Naive thymus-derived CD4-positive, alpha-beta T cell (primary cell): ENCODE measurements at regions of chr16 and their contacts with region 1.

Region 1: DNA sequence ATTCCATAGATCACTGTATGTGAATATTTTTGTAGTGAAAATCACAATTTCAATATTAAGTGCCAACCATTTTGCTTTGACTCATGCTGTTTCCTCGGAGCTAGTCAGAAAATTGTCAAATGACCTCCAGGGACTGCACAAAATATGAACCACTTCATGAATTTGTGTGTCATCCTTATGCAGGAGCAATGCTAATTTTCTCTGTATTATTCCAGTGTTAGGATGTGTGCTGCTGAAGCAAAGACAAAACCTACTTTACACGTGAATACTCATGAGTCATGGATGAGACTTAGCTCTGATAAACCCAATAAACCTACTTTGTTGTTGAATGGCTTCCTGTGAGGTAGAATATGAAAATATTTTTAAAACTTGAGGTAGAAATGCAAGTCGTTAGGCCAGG is 65.2 kb downstream of the SHCBP1 start:
- DNase-seq: no peak
- ATAC-seq: no peak
- H3K4me3 ChIP-seq: no peak overlapping the region
- H3K4me3 Mint-ChIP-seq: no peak overlapping the region
- H3K27ac ChIP-seq: no peak overlapping the region
- H3K27ac Mint-ChIP-seq: peak overlapping the region in 1 of 9 donors; percentile 36
- H3K4me1 ChIP-seq: no peaks in the 10 kb centered on the region
- H3K4me1 Mint-ChIP-seq: peaks cover 0 to 7% (median 0%) of the 10 kb centered on the region in 7 donors
- H3K27me3 ChIP-seq: no peaks in the 10 kb centered on the region
- H3K27me3 Mint-ChIP-seq: peaks cover 9 to 18% (median 13%) of the 10 kb centered on the region in 5 donors

Region 2: GRCh38 chr16:46607529-46607928 is 51.6 kb after region 1 on chr16:
- CTCF ChIA-PET with region 1: interaction called, 5 read pairs
- POLR2A ChIA-PET with region 1: no interaction called
- intact Hi-C with region 1: loop called (anchors 1 kb)
- DNase-seq: peak in 4 of 9 donors; percentile 22 to 33 (median 26)
- ATAC-seq: no peak
- H3K4me3 ChIP-seq: no peak overlapping the region
- H3K4me3 Mint-ChIP-seq: no peak overlapping the region
- H3K27ac ChIP-seq: no peak overlapping the region
- H3K27ac Mint-ChIP-seq: no peak overlapping the region
- H3K4me1 ChIP-seq: no peaks in the 10 kb centered on the region
- H3K4me1 Mint-ChIP-seq: peaks cover 0 to 3% (median 0%) of the 10 kb centered on the region in 7 donors
- H3K27me3 ChIP-seq: no peaks in the 10 kb centered on the region
- H3K27me3 Mint-ChIP-seq: no peaks in the 10 kb centered on the region

Region 3: DNA sequence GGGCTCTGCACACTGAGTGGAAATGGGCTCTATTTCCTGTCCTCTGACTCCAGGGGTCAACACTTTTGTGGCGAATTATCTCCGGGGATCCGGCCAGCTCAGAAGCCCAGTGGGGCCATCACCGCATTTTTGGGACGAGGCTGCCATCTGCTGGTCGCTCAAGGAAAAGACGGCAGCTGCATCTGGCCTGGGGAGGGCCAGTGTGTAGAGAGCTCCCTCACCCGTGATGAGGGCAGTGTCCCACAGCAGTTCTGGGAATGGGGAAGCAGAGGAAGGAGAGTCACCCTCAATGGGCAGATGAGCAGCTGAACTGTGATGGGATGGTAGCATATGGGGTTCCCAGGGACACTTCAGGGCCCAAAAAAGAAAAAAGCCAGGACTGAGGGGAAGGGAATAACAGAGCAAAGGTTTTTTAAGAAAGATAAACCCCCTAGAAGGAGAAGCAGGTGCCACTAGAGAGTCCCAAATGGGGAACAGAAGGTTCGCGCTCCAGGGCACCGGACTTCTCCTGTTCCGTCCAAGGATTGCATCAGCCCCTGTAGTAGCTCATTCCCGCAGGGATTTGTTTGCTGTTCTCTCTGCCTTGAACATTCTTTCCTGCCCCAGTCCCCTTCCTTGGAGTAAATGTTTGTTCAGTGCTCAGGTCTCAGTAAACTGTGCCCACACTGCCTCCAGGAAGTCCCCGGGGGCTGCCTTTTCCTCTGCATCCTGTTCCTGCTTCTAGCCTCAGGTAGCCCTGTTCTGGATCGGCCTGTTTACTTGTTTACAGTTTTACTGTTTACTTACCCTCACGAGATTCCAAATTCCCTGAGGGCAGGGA is 1609.2 kb after region 1 on chr16:
- CTCF ChIA-PET with region 1: no interaction called
- POLR2A ChIA-PET with region 1: no interaction called
- intact Hi-C with region 1: loop called in 1 of 2 experiments (anchors 10 kb)
- DNase-seq: peak; percentile 20 to 71 (median 45)
- ATAC-seq: peak; percentile 87
- H3K4me3 ChIP-seq: no peak overlapping the region
- H3K4me3 Mint-ChIP-seq: peak overlapping the region in 1 of 10 donors; percentile 32
- H3K27ac ChIP-seq: no peak overlapping the region
- H3K27ac Mint-ChIP-seq: peak overlapping the region in 2 of 9 donors; percentile 50 to 88
- H3K4me1 ChIP-seq: no peaks in the 10 kb centered on the region
- H3K4me1 Mint-ChIP-seq: peaks cover 0 to 8% (median 4%) of the 10 kb centered on the region in 7 donors
- H3K27me3 ChIP-seq: no peaks in the 10 kb centered on the region
- H3K27me3 Mint-ChIP-seq: peaks cover 4 to 8% (median 4%) of the 10 kb centered on the region in 5 donors